Activated CD4-positive, alpha-beta memory T cell treated with anti-CD3 and anti-CD28 coated beads, Interleukin-2, amount 10 ng/mL, durations not matched to agents 7 days and 5 days (primary cell): ENCODE measurements at regions of chr3 and their contacts with region 1.

Region 1: DNA sequence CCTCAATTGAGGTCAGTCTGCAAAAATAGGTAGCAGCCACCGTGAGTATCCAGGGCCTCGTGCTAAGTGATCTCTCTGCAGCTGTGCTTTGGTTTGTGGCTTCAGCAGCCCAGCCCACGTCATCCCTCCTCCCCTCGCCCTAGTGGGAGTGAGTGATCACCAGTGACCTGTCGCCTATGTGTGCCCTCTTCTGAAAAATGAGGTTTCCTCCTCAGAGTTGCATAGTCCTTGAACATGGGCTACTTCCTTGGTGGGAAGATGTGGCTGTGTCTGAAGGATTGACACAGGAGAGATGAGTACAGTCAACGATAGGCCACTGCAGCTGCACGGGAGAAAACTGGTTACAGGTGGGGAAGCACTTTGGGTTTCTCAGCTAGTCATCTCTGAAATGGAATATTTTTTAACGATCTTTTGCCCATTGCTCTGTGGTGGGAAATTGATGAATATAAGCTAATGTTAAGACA is 144.8 kb upstream of the BHLHE40 start:
- DNase-seq: peak; percentile 88
- H3K4me3 Mint-ChIP-seq: peak overlapping the region; percentile 69
- H3K27ac Mint-ChIP-seq: peak overlapping the region; percentile 93
- H3K4me1 Mint-ChIP-seq: peaks cover 87% of the 10 kb centered on the region
- H3K27me3 Mint-ChIP-seq: no peaks in the 10 kb centered on the region

Region 2: GRCh38 chr3:4759689-4760312 is 74.6 kb before region 1 on chr3:
- CTCF ChIA-PET with region 1: no interaction called
- POLR2A ChIA-PET with region 1: no interaction called
- DNase-seq: no peak
- H3K4me3 Mint-ChIP-seq: no peak overlapping the region
- H3K27ac Mint-ChIP-seq: peak overlapping the region; percentile 44
- H3K4me1 Mint-ChIP-seq: peaks cover 38% of the 10 kb centered on the region
- H3K27me3 Mint-ChIP-seq: no peaks in the 10 kb centered on the region

Region 3: GRCh38 chr3:4807381-4808280 is 26.8 kb before region 1 on chr3:
- CTCF ChIA-PET with region 1: interaction called, 3 read pairs
- POLR2A ChIA-PET with region 1: interaction called, 13 read pairs
- DNase-seq: no peak
- H3K4me3 Mint-ChIP-seq: peak overlapping the region; percentile 21
- H3K27ac Mint-ChIP-seq: peak overlapping the region; percentile 26
- H3K4me1 Mint-ChIP-seq: peaks cover 72% of the 10 kb centered on the region
- H3K27me3 Mint-ChIP-seq: no peaks in the 10 kb centered on the region

Region 4: DNA sequence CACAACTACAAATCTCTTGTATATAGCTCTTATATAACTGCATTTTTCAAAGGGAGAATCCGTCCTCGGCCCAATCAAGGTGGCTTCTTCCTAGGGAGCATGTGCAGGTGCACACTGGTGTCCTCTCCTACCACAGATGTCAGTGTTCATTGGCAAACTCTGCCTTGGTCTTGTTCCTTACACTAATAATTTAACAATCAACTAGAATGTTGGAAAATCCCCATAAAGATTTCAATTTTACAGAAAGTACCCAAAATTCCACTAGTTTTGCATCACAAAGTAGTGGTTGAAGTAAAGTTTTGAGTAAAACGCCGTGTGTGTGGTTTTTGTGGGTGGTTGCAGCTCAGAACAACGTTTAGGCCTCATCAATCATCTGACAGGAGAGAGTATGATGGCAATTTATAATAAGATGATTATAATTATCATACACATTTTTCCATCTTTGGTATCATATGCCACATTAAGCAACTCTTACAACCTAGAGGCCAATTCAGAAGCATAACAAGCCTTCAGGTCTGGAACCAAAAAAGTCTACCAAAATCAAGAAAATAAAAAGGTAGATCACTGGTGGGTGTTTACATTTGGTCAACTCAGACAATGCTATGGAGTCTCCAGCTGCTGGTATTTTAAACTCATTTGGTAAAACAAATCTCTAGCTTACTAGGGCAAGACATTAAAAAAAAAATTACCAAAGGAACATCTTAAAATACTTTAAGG is 15.9 kb after region 1 on chr3:
- CTCF ChIA-PET with region 1: interaction called, 8 read pairs
- POLR2A ChIA-PET with region 1: interaction called, 455 read pairs
- DNase-seq: peak; percentile 69
- H3K4me3 Mint-ChIP-seq: peak overlapping the region; percentile 38
- H3K27ac Mint-ChIP-seq: peak overlapping the region; percentile 94
- H3K4me1 Mint-ChIP-seq: peaks cover 90% of the 10 kb centered on the region
- H3K27me3 Mint-ChIP-seq: no peaks in the 10 kb centered on the region

Region 5: DNA sequence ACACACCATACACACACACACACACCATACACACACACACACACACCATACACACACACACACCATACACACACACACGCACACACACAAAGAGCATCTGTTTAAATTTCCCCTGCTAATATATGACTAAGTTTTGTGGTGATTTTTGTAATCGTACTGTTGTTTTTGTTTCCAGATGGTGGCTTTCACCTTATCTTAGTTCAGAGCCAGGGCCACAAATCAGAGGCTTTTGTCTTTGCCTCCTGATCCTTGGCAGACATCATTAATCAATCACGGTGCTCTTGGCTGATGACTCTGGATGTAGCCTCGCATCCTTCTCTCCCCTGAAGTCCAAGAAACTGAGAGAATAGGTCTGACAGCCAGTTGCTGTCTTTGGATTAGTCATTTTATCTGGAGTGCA is 405.2 kb after region 1 on chr3:
- CTCF ChIA-PET with region 1: no interaction called
- POLR2A ChIA-PET with region 1: no interaction called
- DNase-seq: no peak
- H3K4me3 Mint-ChIP-seq: no peak overlapping the region
- H3K27ac Mint-ChIP-seq: no peak overlapping the region
- H3K4me1 Mint-ChIP-seq: peaks cover 5% of the 10 kb centered on the region
- H3K27me3 Mint-ChIP-seq: no peaks in the 10 kb centered on the region